ENCODE measurements at regions of chr1 and their contacts with region 1.

Region 1: GRCh38 chr1:214584805-214585766 is 17.9 kb upstream of the CENPF start:
- DNase-seq: no peak
- H3K4me3 ChIP-seq: no peak overlapping the region
- H3K27ac ChIP-seq: no peak overlapping the region
- H3K4me1 ChIP-seq: peaks cover 0 to 3% (median 0%) of the 10 kb centered on the region in 4 donors
- H3K27me3 ChIP-seq: no peaks in the 10 kb centered on the region
- CTCF ChIP-seq: peak; percentile 74 to 81 (median 79)
- EP300 ChIP-seq: no peak
- POLR2A ChIP-seq: no peak

Region 2: GRCh38 chr1:214102907-214103306 is 482.2 kb before region 1 on chr1:
- intact Hi-C with region 1: no loop called
- DNase-seq: no peak
- H3K4me3 ChIP-seq: no peak overlapping the region
- H3K27ac ChIP-seq: no peak overlapping the region
- H3K4me1 ChIP-seq: peaks cover 0 to 8% (median 3%) of the 10 kb centered on the region in 4 donors
- H3K27me3 ChIP-seq: peaks cover 0 to 11% (median 0%) of the 10 kb centered on the region in 4 donors
- CTCF ChIP-seq: no peak
- EP300 ChIP-seq: no peak
- POLR2A ChIP-seq: no peak

Region 3: GRCh38 chr1:214261206-214262123 is 323.6 kb before region 1 on chr1:
- intact Hi-C with region 1: loop called (anchors 5 kb)
- DNase-seq: no peak
- H3K4me3 ChIP-seq: no peak overlapping the region
- H3K27ac ChIP-seq: no peak overlapping the region
- H3K4me1 ChIP-seq: peaks cover 2 to 7% (median 5%) of the 10 kb centered on the region in 4 donors
- H3K27me3 ChIP-seq: peaks cover 0 to 69% (median 3%) of the 10 kb centered on the region in 4 donors
- CTCF ChIP-seq: peak in 2 of 3 experiments; percentile 91 to 92
- EP300 ChIP-seq: peak; percentile 3
- POLR2A ChIP-seq: no peak

Region 4: GRCh38 chr1:214386747-214387146 is 198.3 kb before region 1 on chr1:
- intact Hi-C with region 1: loop called (anchors 5 kb)
- DNase-seq: no peak
- H3K4me3 ChIP-seq: no peak overlapping the region
- H3K27ac ChIP-seq: peak overlapping the region in 2 of 4 donors; percentile 48 to 52
- H3K4me1 ChIP-seq: no peaks in the 10 kb centered on the region
- H3K27me3 ChIP-seq: no peaks in the 10 kb centered on the region
- CTCF ChIP-seq: no peak
- EP300 ChIP-seq: no peak
- POLR2A ChIP-seq: no peak

Region 5: GRCh38 chr1:214506972-214507482 is 78.1 kb before region 1 on chr1:
- intact Hi-C with region 1: no loop called
- DNase-seq: peak; percentile 75
- H3K4me3 ChIP-seq: no peak overlapping the region
- H3K27ac ChIP-seq: no peak overlapping the region
- H3K4me1 ChIP-seq: peaks cover 7 to 17% (median 12%) of the 10 kb centered on the region in 4 donors
- H3K27me3 ChIP-seq: no peaks in the 10 kb centered on the region
- CTCF ChIP-seq: no peak
- EP300 ChIP-seq: no peak
- POLR2A ChIP-seq: no peak

Measured in esophagus muscularis mucosa (tissue), 4 donors.